Activated CD4-positive, alpha-beta memory T cell treated with anti-CD3 and anti-CD28 coated beads, Interleukin-2, amount 10 ng/mL, durations not matched to agents 7 days and 5 days (primary cell): ENCODE measurements at regions of chr16 and their contacts with region 1.

Region 1: GRCh38 chr16:4675864-4676786 is 17.2 kb upstream of the NUDT16L1 start:
- DNase-seq: peak; percentile 89
- H3K4me3 Mint-ChIP-seq: peak overlapping the region; percentile 62
- H3K27ac Mint-ChIP-seq: peak overlapping the region; percentile 100
- H3K4me1 Mint-ChIP-seq: peaks cover 33% of the 10 kb centered on the region
- H3K27me3 Mint-ChIP-seq: no peaks in the 10 kb centered on the region

Region 2: DNA sequence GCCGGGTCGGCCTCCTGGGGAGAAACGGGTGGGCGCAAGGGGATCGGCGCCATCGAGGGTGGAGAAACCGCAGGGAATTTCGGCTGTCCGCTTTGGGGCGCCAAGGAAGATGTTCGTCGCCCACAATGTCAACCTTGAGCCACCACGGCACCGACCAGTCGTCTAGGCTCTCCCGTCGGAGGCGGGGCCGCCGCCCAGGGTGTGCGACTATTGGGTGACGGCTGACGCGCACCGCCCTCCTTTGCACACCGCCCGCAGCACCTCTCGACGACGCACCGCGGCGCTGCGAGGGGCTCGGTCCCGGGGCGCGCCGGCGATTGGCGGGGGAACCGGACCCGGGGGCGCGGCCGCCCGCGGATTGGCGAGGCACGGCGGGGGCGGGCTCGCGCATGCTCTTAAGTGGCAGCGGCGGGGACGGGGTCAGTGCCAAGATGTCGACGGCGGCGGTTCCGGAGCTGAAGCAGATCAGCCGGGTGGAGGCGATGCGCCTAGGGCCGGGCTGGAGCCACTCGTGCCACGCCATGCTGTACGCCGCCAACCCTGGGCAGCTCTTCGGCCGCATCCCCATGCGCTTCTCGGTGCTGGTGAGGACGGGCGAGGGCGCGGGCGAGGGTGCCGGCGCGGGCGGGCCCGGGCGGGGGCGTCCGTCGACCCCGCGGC is 17.3 kb after region 1 on chr16 and contains the start of gene NUDT16L1:
- CTCF ChIA-PET with region 1: no interaction called
- POLR2A ChIA-PET with region 1: interaction called, 20 read pairs
- DNase-seq: peak; percentile 98
- H3K4me3 Mint-ChIP-seq: peak within 1 kb of the TSS; percentile 79
- H3K27ac Mint-ChIP-seq: peak within 1 kb of the TSS; percentile 78
- H3K4me1 Mint-ChIP-seq: peaks cover 18% of the 10 kb centered on the region
- H3K27me3 Mint-ChIP-seq: no peaks in the 10 kb centered on the region
- total RNA-seq, gene NUDT16L1: 24.2 to 25.5 TPM

Region 3: GRCh38 chr16:4734063-4734729 is 58.1 kb after region 1 on chr16 and contains the starts of genes ANKS3 and DNAAF8:
- CTCF ChIA-PET with region 1: no interaction called
- POLR2A ChIA-PET with region 1: no interaction called
- DNase-seq: peak; percentile 81
- H3K4me3 Mint-ChIP-seq: peak within 1 kb of the TSS; percentile 78
- H3K27ac Mint-ChIP-seq: peak within 1 kb of the TSS; percentile 78
- H3K4me1 Mint-ChIP-seq: peaks cover 24% of the 10 kb centered on the region
- H3K27me3 Mint-ChIP-seq: no peaks in the 10 kb centered on the region
- total RNA-seq, gene ANKS3: 10.0 to 10.2 TPM
- total RNA-seq, gene DNAAF8: not detected

Region 4: GRCh38 chr16:4766874-4767628 is 90.9 kb after region 1 on chr16 and contains the start of gene ZNF500:
- CTCF ChIA-PET with region 1: no interaction called
- POLR2A ChIA-PET with region 1: no interaction called
- DNase-seq: peak; percentile 96
- H3K4me3 Mint-ChIP-seq: peak within 1 kb of the TSS; percentile 89
- H3K27ac Mint-ChIP-seq: peak within 1 kb of the TSS; percentile 92
- H3K4me1 Mint-ChIP-seq: peaks cover 36% of the 10 kb centered on the region
- H3K27me3 Mint-ChIP-seq: no peaks in the 10 kb centered on the region
- total RNA-seq, gene ZNF500: 14.7 to 15.3 TPM